GM18951 (cell line): ENCODE measurements at regions of chr7 and their contacts with region 1.

Region 1: DNA sequence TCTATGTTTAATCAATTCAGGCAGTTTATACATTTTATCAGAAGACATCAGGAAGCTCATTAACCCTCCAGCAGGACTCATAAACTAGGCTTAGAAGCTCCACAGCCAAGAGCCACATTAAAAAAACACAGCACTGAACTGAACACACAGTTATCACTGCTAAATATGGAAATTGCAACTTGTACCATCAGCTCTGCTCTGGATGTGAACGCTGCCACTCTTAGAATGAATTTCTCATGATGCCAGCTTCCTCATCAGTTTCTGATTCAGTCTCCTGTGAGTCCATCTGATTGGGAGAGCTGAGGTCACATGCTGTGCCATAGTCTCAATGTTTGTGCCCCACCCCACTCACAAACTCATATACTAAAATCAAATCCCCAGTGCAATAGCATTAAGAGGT is 17.1 kb upstream of the ING3 start:
- POLR2A ChIP-seq: no peak

Region 2: DNA sequence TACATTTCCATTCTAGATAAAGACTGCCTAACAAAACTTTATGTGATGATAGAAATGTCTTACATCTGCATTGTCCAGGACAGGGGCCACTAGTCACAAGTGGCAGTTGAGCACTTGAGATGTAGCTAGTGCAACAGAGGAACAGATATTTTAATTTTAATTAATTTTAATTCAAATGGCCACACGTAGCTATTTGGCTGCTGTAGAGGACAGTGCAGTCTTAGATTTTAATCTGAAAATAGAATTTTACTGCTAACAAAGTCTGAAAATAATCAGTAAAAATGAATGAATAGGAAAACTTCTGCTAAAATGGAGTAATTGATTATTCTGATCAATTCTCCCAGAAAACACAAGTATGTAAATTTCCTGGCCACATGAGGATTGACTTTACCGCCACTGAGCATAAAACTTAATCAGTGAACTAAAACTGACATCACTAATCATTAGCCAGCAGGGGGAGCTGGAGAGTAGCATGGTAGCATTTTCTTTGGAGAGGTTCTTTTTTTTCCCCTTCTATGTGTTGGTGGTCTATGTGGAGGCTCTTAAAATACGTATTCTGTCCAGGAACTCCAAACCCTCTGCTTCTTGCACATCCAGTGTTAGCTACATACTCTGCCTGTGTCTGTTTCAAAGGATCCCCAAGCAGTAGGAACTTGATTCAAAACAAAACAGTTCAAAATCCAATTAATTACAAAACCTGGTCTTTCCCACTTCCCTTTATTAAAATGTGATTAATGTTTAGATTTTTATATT is 127.7 kb before region 1 on chr7:
- in situ Hi-C with region 1: loop called (anchors 10 kb)
- POLR2A ChIP-seq: no peak